Endothelial cell of umbilical vein (primary cell): ENCODE measurements at regions of chr10 and their contacts with region 1.

Region 1: GRCh38 chr10:68988530-68989316 is at the start of gene KIFBP:
- DNase-seq: peak; percentile 99
- H3K4me3 ChIP-seq: peak within 1 kb of the TSS; percentile 71 to 84 (median 84)
- H3K27ac ChIP-seq: peak within 1 kb of the TSS; percentile 20
- H3K4me1 ChIP-seq: peaks cover 25% of the 10 kb centered on the region
- H3K27me3 ChIP-seq: no peaks in the 10 kb centered on the region
- CTCF ChIP-seq: peak; percentile 44 to 61
- POLR2A ChIP-seq: peak; percentile 90
- total RNA-seq, gene KIFBP: 37.3 and 39.8 TPM in 2 replicates

Region 2: DNA sequence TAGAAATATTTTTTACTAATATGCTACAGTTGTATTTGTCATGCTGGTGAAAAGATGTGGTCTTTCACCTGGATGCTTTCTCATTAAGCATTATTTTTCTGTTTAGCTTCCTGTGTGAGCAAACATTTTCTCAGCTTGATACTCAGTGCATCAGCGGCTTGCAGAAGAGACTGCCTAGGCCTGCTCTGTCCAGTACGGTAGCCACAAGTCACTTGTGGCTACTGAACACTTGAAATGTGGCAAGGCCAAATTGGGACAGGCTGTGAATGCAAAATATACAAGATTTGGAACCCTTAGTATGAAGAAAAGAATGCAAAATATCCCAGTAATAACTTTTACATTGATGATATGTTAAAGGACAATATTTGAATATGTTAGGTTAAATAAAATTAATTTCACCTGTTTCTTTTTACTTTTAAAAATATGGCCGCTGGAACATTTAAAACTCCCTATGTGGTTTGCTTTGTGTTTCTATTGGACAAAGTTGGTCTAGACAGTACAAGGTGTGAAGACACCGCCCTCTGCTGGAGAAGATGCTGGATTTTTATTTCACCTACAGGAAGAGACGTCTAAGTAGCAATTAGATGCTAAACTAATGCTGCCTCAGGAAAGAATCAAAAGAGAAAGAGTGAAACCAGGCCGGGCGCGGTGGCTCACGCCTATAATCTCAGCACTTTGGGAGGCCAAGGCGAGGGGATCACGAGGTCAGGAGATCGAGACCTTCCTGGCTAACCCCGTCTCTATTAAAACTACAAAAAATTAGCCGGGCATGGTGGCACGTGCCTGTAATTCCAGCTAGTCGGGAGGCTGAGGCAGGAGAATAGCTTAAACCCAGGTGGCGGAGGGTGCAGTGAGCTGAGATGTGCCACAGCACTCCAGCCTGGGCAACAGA is 104.5 kb after region 1 on chr10:
- CTCF ChIA-PET with region 1: interaction called, 3 read pairs
- POLR2A ChIA-PET with region 1: interaction called, 4 read pairs
- dilution Hi-C with region 1: no loop called
- intact Hi-C with region 1: loop called (anchors 1 kb)
- DNase-seq: peak; percentile 85
- H3K4me3 ChIP-seq: no peak overlapping the region
- H3K27ac ChIP-seq: no peak overlapping the region
- H3K4me1 ChIP-seq: peaks cover 33% of the 10 kb centered on the region
- H3K27me3 ChIP-seq: no peaks in the 10 kb centered on the region
- CTCF ChIP-seq: peak; percentile 54 to 55
- POLR2A ChIP-seq: no peak

Region 3: GRCh38 chr10:69179743-69180524 is 191.2 kb after region 1 on chr10 and contains the start of gene SUPV3L1:
- CTCF ChIA-PET with region 1: no interaction called
- POLR2A ChIA-PET with region 1: no interaction called
- dilution Hi-C with region 1: no loop called
- intact Hi-C with region 1: loop called (anchors 1 kb)
- DNase-seq: peak; percentile 97
- H3K4me3 ChIP-seq: peak within 1 kb of the TSS; percentile 61 to 96 (median 64)
- H3K27ac ChIP-seq: peak within 1 kb of the TSS; percentile 94
- H3K4me1 ChIP-seq: peaks cover 17% of the 10 kb centered on the region
- H3K27me3 ChIP-seq: no peaks in the 10 kb centered on the region
- CTCF ChIP-seq: no peak
- POLR2A ChIP-seq: peak; percentile 76
- total RNA-seq, gene SUPV3L1: 30.0 and 30.4 TPM in 2 replicates

Region 4: DNA sequence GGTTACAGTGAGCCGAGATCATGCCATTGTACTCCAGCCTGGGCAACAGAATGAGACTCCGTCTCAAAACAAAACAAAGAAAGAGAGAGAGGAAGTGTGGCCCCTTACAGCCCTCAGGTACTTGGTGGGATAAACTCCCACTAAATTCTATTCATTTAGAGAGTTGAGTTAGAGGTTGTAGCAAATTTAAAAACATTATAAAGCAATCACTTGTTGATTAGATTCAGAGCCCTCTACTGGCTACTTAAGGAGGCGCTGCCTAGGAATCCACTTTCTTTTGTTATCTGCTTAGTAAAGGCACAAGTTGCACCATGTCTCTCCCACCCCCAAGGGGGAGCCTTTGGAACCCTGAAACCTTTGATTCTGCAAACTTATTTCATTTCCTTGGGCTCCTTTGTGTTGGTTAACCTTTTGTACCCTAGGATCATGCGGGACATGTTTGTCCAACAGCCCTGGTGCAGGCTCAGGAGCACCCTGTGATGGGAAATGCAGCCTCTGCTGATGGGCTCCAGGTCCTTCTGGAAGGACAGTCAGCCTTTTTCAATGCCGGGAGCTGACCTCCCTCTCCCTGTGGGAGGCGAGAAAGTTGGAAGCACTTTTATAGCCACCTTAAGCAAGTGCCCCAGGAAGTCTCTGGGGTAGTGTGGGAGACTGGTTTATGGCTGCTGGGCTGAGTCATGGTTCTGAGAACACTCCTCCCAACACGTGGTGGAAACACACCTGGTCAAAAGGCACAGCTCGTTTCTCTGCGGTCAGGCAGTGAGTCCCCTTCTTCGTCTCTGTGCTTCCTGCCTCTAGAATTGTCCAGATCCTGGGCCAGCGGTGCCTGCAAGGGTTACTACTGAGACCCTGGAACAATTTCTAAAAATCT is 233.7 kb after region 1 on chr10:
- CTCF ChIA-PET with region 1: no interaction called
- POLR2A ChIA-PET with region 1: no interaction called
- dilution Hi-C with region 1: no loop called
- intact Hi-C with region 1: loop called (anchors 2 kb)
- DNase-seq: peak; percentile 73
- H3K4me3 ChIP-seq: no peak overlapping the region
- H3K27ac ChIP-seq: peak overlapping the region; percentile 3
- H3K4me1 ChIP-seq: peaks cover 22% of the 10 kb centered on the region
- H3K27me3 ChIP-seq: no peaks in the 10 kb centered on the region
- CTCF ChIP-seq: peak; percentile 60 to 69
- POLR2A ChIP-seq: no peak

Region 5: GRCh38 chr10:69392481-69393000 is 403.8 kb after region 1 on chr10:
- CTCF ChIA-PET with region 1: no interaction called
- POLR2A ChIA-PET with region 1: no interaction called
- dilution Hi-C with region 1: no loop called
- intact Hi-C with region 1: no loop called
- DNase-seq: peak; percentile 78
- H3K4me3 ChIP-seq: no peak overlapping the region
- H3K27ac ChIP-seq: no peak overlapping the region
- H3K4me1 ChIP-seq: peaks cover 4% of the 10 kb centered on the region
- H3K27me3 ChIP-seq: no peaks in the 10 kb centered on the region
- CTCF ChIP-seq: peak; percentile 92 to 93
- POLR2A ChIP-seq: no peak